ENCODE measurements at regions of chr9 and their contacts with region 1.

Region 1: GRCh38 chr9:6412487-6413364 is at the start of gene UHRF2:
- DNase-seq: peak; percentile 98
- H3K4me3 ChIP-seq: peak within 1 kb of the TSS; percentile 82 to 95 (median 84)
- H3K27ac ChIP-seq: peak within 1 kb of the TSS; percentile 75
- H3K4me1 ChIP-seq: peaks cover 19% of the 10 kb centered on the region
- H3K27me3 ChIP-seq: no peaks in the 10 kb centered on the region
- CTCF ChIP-seq: peak in 1 of 2 donors; percentile 4
- total RNA-seq, gene UHRF2: 45.5 to 72.0 TPM

Region 2: GRCh38 chr9:6368831-6369230 is 43.9 kb before region 1 on chr9:
- CTCF ChIA-PET with region 1: no interaction called
- dilution Hi-C with region 1: no loop called
- in situ Hi-C with region 1: no loop called
- intact Hi-C with region 1: no loop called
- DNase-seq: no peak
- H3K4me3 ChIP-seq: no peak overlapping the region
- H3K27ac ChIP-seq: no peak overlapping the region
- H3K4me1 ChIP-seq: no peaks in the 10 kb centered on the region
- H3K27me3 ChIP-seq: no peaks in the 10 kb centered on the region
- CTCF ChIP-seq: no peak

Region 3: DNA sequence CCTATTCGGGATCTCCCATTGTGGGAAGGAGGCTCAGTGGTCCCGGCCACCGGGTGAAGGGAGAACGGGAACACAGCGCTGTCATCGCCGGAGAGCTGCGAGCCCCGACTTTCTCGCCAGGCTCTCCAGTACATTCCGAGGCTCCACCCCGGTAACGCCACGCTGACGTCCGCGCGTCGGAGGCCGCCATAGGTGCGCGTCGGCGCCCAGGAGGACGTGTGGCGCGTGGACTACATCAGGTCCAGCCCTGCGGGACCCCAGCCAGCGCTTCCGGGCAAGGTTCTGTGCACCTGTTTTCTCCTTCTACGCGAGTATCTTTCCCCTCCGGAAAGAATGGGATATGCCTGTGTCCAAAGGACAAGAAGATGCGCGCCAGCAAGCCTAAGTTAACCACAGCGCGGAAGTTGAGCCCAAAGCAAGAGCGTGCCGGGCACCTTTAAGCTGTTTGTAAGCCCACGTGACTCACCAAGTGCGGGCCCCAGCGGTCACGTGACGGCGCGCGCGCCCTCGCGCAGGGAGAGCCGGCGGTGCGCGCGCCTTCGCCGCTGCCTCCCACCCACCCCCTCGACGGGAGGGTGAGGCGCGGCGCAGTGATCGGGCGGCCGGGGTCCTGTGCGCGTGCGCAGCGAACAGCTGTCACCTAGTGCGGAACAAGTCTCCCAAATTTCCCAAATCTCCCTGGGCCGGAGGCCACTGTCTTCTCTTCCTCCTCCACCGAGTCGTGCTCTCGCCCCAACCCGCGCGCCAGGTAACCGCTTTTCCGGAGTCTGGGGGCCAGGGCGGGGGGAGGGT is 344.9 kb after region 1 on chr9 and contains the start of gene KDM4C:
- CTCF ChIA-PET with region 1: no interaction called
- dilution Hi-C with region 1: no loop called
- in situ Hi-C with region 1: no loop called
- intact Hi-C with region 1: loop called (anchors 5 kb)
- DNase-seq: peak; percentile 94
- H3K4me3 ChIP-seq: peak within 1 kb of the TSS; percentile 80 to 97 (median 89)
- H3K27ac ChIP-seq: peak within 1 kb of the TSS; percentile 95
- H3K4me1 ChIP-seq: peaks cover 5% of the 10 kb centered on the region
- H3K27me3 ChIP-seq: no peaks in the 10 kb centered on the region
- CTCF ChIP-seq: no peak
- total RNA-seq, gene KDM4C: 27.2 to 34.7 TPM

Region 4: DNA sequence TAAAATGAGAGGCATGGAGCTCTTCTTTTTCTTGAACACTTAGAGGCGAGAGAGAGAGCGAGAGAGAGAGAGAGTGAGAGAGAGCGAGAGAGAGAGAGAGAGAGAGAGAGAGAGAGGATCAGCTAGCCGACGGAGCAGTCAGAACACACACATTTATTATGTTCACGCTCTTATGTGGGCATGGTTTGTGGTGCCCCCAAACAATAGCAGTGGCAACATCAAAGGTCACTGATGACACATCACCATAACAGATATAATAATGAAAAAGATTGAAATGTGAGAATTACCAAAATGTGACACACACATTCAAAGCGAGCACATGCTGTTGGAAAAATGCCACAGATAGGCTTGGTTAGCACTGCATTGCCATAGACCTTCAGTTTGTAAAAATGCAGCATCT is 461.1 kb after region 1 on chr9:
- CTCF ChIA-PET with region 1: no interaction called
- dilution Hi-C with region 1: no loop called
- in situ Hi-C with region 1: no loop called
- intact Hi-C with region 1: no loop called
- DNase-seq: no peak
- H3K4me3 ChIP-seq: no peak overlapping the region
- H3K27ac ChIP-seq: no peak overlapping the region
- H3K4me1 ChIP-seq: peaks cover 17% of the 10 kb centered on the region
- H3K27me3 ChIP-seq: no peaks in the 10 kb centered on the region
- CTCF ChIP-seq: no peak